Cardiac septum (tissue), 1 donor: ENCODE measurements at regions of chr21 and their contacts with region 1.

Region 1: DNA sequence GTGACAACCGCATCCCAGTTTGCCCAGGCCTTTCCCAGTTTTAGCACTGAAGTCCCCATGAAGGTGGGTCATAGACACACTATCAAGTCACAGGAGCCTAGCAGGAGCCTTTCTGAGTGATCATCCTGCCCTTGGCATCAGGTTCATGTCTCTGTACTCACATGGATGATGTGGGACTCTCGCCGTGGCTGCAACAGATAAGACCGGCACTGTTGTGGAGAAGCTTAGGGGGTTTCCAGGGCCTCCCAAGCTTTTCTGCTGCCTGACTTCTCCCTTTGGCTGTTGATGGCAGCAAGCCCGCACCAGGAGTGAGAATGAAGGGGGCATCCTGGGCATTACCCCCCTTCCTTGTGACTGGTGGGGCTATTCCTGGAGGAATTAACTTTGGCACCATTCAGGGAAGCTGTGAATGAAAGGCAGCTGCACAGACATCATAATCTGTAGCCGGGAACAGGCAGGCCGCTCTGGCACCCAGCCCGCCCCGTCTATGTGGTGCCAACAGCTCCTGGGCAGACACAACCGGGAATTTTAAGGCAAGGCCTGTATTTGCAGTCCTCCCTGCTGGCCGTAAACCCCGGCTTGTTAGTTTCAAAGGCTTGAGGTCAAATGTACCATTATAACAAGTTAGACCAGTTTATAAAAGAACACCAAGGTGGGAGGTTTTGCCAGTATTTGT is 148.6 kb downstream of the HUNK start:
- DNase-seq: peak; percentile 83

Region 2: GRCh38 chr21:31725202-31725839 is 296.1 kb before region 1 on chr21:
- intact Hi-C with region 1: no loop called
- DNase-seq: no peak

Region 3: DNA sequence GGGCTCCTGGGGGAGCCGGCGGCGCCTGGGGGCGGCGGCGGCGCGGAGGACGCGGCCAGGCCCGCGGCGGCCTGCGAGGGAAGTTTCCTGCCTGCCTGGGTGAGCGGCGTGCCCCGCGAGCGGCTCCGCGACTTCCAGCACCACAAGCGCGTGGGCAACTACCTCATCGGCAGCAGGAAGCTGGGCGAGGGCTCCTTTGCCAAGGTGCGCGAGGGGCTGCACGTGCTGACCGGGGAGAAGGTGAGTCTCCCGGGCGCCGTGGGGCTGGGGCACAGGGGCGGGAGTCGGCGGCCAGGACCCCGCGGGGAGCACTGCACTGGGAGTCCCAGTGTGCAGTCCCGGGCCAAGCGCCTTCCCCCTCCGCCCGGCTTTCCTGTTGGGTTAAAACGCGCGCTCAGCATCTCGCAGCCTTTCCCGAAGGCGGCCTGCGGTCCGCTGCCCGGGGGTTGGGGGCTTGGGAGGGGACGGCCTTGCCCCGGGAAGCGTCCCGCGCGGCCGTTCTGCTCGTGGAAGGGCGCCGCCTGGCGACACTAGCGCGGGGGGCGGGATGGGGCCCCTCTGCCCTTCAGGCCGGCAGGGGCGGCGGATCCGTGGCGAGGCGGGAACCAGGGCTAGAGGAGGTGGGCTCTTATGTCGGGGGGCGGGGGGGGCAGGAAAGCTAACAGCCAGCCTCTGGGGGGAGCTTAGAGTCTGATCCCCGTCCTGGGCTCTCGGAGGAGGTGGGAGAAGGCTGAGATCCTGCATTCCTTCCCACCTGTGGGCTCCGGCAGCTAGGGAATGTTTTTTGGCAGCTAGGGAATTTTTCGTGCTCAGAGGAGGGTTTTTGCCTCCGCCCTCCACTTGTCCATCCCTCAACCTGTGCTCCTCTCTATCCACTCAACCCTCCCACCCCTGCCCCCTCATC is 147.5 kb before region 1 on chr21:
- intact Hi-C with region 1: no loop called
- DNase-seq: no peak

Region 4: DNA sequence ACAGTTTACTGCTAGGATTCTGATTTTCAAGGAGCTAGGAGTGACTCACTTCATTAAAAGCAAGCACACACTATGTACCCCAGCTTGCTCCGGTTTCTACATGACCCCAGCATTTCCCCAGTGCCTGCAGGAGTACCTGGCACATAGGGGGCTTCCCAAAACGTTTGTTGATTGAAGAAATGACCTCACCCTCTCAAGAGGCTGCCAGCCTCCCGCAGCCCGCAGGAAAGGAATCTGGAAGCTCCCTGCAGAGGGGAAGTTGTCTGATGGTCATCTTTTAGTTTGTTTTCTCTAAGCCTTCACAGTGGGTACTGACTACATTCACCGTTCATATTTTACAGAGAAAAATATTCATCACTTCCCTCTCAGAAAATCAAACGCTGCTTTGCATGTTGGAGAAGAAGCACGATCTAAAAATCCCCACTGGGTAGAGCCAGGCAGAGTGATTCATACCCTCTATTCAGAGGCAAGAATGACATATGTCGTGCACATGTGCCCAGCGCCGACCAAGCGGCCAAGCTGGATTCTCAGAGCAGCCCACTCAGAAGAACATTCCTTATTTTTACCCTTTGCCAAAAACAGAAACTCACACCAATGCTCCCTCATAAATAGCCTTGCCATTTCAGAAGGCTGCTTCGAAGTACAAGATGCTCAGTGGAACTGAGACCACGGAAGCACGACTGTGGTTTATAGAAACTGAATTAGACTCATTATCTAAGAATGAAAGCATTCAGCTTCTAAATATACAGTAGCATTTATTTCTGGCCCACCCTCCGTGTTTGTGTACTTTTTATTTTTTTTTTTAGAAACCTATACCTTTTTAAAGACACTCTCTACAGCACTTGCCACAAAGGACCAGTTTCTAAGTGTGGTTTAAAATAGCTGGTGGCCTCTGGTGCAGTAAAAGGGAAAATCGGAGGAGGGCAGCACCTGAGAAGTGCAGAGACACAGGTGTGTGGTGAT is 114.2 kb after region 1 on chr21:
- intact Hi-C with region 1: loop called (anchors 10 kb)
- DNase-seq: no peak

Region 5: GRCh38 chr21:32184485-32184884 is 163.0 kb after region 1 on chr21:
- intact Hi-C with region 1: loop called (anchors 5 kb)
- DNase-seq: no peak

Region 6: DNA sequence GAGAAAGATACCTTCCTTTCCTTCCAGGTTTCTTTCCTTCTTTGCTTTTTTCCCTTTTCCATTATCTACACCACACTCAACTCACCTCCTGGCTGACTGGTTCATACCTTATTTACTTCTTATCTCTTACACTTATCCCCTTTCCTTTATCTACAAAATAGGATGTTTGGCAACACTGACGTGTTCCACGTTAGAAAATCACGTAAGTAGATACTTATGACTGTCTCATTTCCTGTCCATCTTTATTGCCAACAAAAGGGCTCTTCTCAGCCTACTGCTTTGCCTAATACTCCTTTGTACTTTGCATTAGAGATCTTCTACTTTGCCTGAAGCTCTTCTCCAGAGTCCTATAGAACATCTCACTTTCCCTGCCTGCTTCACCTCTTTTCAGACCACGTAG is 681.2 kb after region 1 on chr21:
- intact Hi-C with region 1: no loop called
- DNase-seq: no peak